PC-3 (cell line): ENCODE measurements at regions of chrX and their contacts with region 1.

Region 1: GRCh38 chrX:123422877-123423276 is 238.8 kb downstream of the GRIA3 start:
- DNase-seq: peak; percentile 53
- ATAC-seq: 0 out of 2 replicates have a peak, but pooled peaks have one; percentile 28
- H3K4me3 ChIP-seq: no peak overlapping the region
- H3K27ac ChIP-seq: no peak overlapping the region
- H3K4me1 ChIP-seq: peaks cover 25% of the 10 kb centered on the region
- H3K27me3 ChIP-seq: no peaks in the 10 kb centered on the region
- CTCF ChIP-seq: peak; percentile 82

Region 2: GRCh38 chrX:123173833-123174232 is 249.0 kb before region 1 on chrX:
- CTCF ChIA-PET with region 1: no interaction called
- POLR2A ChIA-PET with region 1: no interaction called
- intact Hi-C with region 1: loop called (anchors 1 kb)
- DNase-seq: peak; percentile 51
- ATAC-seq: peak; percentile 31; the same call in 1 of the 2 replicates
- H3K4me3 ChIP-seq: no peak overlapping the region
- H3K27ac ChIP-seq: no peak overlapping the region
- H3K4me1 ChIP-seq: peaks cover 8% of the 10 kb centered on the region
- H3K27me3 ChIP-seq: no peaks in the 10 kb centered on the region
- CTCF ChIP-seq: peak; percentile 54

Region 3: GRCh38 chrX:123277821-123278423 is 145.0 kb before region 1 on chrX:
- CTCF ChIA-PET with region 1: interaction called, 3 read pairs
- POLR2A ChIA-PET with region 1: no interaction called
- intact Hi-C with region 1: loop called (anchors 2 kb)
- DNase-seq: no peak
- ATAC-seq: no peak
- H3K4me3 ChIP-seq: no peak overlapping the region
- H3K27ac ChIP-seq: no peak overlapping the region
- H3K4me1 ChIP-seq: no peaks in the 10 kb centered on the region
- H3K27me3 ChIP-seq: no peaks in the 10 kb centered on the region
- CTCF ChIP-seq: no peak

Region 4: DNA sequence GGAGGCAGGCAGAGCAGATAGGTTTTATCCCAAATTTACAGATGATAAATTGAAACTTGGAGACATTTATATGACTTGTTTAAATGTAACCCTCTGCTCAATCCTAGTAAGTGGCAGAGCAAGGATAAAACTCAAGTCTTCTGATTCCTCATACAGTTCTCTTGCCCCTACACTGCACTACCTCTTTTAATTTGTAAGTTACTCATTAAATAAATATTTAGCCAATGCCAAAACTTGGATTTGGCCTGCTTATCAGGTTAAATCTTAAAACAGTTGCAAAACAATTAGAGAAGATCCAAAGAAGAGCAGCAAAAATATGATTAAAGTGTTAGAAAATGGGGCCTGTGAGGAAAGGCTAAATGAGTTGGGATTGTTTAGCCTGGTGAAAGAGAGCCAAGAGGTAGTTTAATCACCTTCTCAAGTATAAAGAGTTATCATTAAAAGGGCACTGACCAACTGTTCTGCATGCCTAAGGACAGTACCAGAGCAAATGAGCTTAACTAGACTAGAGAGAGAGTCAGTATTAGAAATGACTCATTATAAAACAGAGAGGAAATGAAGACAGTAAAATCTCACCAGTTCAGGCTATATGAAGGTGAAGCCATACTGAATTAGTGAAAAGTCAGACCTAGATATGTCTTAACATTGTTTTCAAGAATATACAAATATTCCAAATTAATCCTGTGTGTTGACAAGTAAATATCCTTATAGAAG is 92.5 kb before region 1 on chrX:
- CTCF ChIA-PET with region 1: no interaction called
- POLR2A ChIA-PET with region 1: no interaction called
- intact Hi-C with region 1: loop called (anchors 5 kb)
- DNase-seq: peak; percentile 32
- ATAC-seq: peak; percentile 97
- H3K4me3 ChIP-seq: no peak overlapping the region
- H3K27ac ChIP-seq: no peak overlapping the region
- H3K4me1 ChIP-seq: peaks cover 5% of the 10 kb centered on the region; the same call in 1 of the 2 replicates
- H3K27me3 ChIP-seq: no peaks in the 10 kb centered on the region
- CTCF ChIP-seq: no peak